Panc1 (cell line): ENCODE measurements at regions of chr7 and their contacts with region 1.

Region 1: DNA sequence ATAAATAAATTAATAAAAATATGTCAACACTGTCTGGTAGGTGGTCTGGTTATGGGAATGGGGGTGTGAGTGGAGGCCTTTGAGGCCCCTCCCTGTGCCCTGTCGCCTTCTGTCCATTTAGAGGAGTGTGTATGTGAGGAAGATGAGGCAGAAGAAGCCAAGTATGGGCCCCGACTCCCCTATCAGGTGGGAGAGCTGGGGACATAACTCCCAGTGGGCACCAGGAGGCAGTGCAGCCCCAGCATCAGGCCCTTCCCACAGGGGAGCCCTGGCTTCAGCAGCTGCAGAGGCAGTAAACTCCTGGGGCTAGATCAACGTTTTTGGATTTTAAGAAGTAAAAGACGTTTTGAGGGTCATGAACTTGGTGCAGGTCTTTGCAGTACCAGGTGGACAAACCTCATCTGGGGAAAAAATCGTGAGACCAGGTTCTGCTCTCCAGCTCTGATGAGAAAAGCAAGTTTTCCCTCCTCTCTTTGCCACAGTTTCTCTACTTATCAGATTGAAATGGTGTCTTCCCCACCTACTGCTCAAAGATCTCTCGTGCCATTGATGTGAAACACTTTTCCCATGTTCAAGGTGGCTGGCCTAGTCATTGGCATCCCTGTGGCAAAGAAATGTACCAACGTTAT is 167.8 kb upstream of the EEPD1 start:
- DNase-seq: no peak
- ATAC-seq: peak; percentile 94
- H3K4me3 ChIP-seq: no peak overlapping the region
- H3K27ac ChIP-seq: peak overlapping the region; percentile 29
- H3K4me1 ChIP-seq: peaks cover 13% of the 10 kb centered on the region
- H3K27me3 ChIP-seq: no peaks in the 10 kb centered on the region
- CTCF ChIP-seq: peak; percentile 98

Region 2: DNA sequence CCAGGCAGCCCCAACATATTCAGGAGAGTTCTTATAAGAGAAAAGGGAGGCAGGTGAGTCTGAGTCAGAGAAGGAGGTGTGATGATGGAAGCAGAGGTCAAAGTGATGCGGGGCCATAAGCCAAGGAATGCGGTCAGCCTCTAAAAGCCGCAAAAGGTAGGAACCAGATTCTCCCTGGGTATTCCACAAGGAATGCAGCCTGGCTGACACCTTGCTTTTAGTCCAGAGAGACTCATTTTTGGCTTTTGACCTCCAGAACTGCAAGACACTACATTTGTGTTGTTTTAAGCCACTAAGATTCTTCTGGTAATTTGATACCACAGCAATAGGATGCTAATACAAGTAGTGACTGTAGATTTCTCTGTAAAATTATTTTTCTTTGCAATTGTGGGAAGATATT is 16.3 kb after region 1 on chr7:
- CTCF ChIA-PET with region 1: no interaction called
- POLR2A ChIA-PET with region 1: no interaction called
- in situ Hi-C with region 1: no loop called
- intact Hi-C with region 1: no loop called
- DNase-seq: no peak
- ATAC-seq: no peak
- H3K4me3 ChIP-seq: no peak overlapping the region
- H3K27ac ChIP-seq: no peak overlapping the region
- H3K4me1 ChIP-seq: no peaks in the 10 kb centered on the region
- H3K27me3 ChIP-seq: no peaks in the 10 kb centered on the region
- CTCF ChIP-seq: no peak

Region 3: DNA sequence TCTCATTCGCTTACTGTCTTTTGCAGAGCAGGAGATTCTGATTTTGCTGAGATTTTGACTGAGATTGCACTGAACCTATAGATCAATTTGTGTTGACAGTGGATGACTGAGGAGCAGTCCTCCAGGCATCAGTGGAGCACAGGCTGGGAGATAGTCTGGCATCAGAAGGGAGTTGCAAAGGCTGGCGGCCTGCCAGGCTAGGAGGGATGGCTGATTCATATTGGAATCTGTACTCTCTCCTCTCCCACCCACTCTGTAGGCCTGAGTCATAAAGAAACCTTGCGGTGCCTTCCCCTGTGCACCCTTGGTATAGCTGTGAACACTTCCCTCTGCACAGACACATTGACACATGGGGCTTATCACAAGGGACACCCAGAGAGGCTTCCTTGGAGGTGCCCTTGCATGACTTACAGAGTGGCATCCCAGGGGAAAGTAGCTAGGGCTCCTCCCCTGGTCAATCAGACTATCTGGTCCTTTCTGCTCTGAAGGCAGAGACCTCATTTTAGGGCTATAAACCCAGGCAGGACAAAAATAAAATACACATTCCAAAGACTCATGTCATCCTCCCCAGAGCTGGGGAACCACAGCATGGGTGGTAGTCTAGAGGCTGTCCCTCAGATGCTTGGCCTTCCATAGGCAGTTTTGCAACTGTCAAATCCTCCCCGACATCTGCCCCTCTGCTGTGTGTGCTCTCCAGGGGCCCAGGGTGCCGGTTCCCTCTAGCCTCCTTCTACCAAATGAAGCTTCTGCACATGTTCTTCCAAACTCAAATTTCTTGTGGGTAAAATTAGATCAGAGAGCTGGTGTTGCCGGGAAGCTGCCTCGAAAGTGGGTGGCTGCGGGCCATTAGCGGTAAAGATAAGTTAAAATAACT is 130.4 kb after region 1 on chr7:
- CTCF ChIA-PET with region 1: no interaction called
- POLR2A ChIA-PET with region 1: no interaction called
- in situ Hi-C with region 1: loop called (anchors 25 kb)
- intact Hi-C with region 1: no loop called
- DNase-seq: peak; percentile 96
- ATAC-seq: peak; percentile 96
- H3K4me3 ChIP-seq: no peak overlapping the region
- H3K27ac ChIP-seq: peak overlapping the region; percentile 74
- H3K4me1 ChIP-seq: peaks cover 25% of the 10 kb centered on the region
- H3K27me3 ChIP-seq: no peaks in the 10 kb centered on the region
- CTCF ChIP-seq: no peak

Region 4: GRCh38 chr7:36153571-36154097 is 168.4 kb after region 1 on chr7:
- CTCF ChIA-PET with region 1: no interaction called
- POLR2A ChIA-PET with region 1: no interaction called
- in situ Hi-C with region 1: no loop called
- intact Hi-C with region 1: loop called (anchors 2 kb)
- DNase-seq: no peak
- ATAC-seq: peak; percentile 1; the same call in 1 of the 2 replicates
- H3K4me3 ChIP-seq: peak overlapping the region; percentile 78 to 96
- H3K27ac ChIP-seq: peak overlapping the region; percentile 91
- H3K4me1 ChIP-seq: peaks cover 28% of the 10 kb centered on the region
- H3K27me3 ChIP-seq: no peaks in the 10 kb centered on the region
- CTCF ChIP-seq: no peak

Region 5: GRCh38 chr7:36232971-36233550 is 247.8 kb after region 1 on chr7:
- CTCF ChIA-PET with region 1: interaction called, 12 read pairs
- POLR2A ChIA-PET with region 1: no interaction called
- in situ Hi-C with region 1: no loop called
- intact Hi-C with region 1: no loop called
- DNase-seq: no peak
- ATAC-seq: no peak
- H3K4me3 ChIP-seq: no peak overlapping the region
- H3K27ac ChIP-seq: peak overlapping the region; percentile 19; the same call in 1 of the 2 replicates
- H3K4me1 ChIP-seq: peaks cover 22% of the 10 kb centered on the region
- H3K27me3 ChIP-seq: no peaks in the 10 kb centered on the region
- CTCF ChIP-seq: no peak

Region 6: GRCh38 chr7:36303202-36304098 is 318.2 kb after region 1 on chr7:
- CTCF ChIA-PET with region 1: no interaction called
- POLR2A ChIA-PET with region 1: no interaction called
- in situ Hi-C with region 1: loop called (anchors 25 kb)
- intact Hi-C with region 1: no loop called
- DNase-seq: peak; percentile 67
- ATAC-seq: peak; percentile 69
- H3K4me3 ChIP-seq: no peak overlapping the region
- H3K27ac ChIP-seq: peak overlapping the region; percentile 10
- H3K4me1 ChIP-seq: peaks cover 27% of the 10 kb centered on the region
- H3K27me3 ChIP-seq: no peaks in the 10 kb centered on the region
- CTCF ChIP-seq: no peak